Heart right ventricle (tissue), 16 donors: ENCODE measurements at regions of chr7 and their contacts with region 1.

Region 1: GRCh38 chr7:47088329-47089067 is 493.4 kb downstream of the TNS3 start:
- DNase-seq: peak; percentile 54 to 65
- ATAC-seq: peak; percentile 85 to 95 (median 90)
- H3K4me3 ChIP-seq: no peak overlapping the region
- H3K27ac ChIP-seq: no peak overlapping the region
- H3K4me1 ChIP-seq: peaks cover 0 to 13% (median 7%) of the 10 kb centered on the region in 9 donors
- H3K27me3 ChIP-seq: no peaks in the 10 kb centered on the region
- CTCF ChIP-seq: peak; percentile 80 to 97 (median 92)

Region 2: GRCh38 chr7:46352004-46352954 is 736.2 kb before region 1 on chr7:
- intact Hi-C with region 1: loop called in 9 of 10 experiments (anchors 5 to 10 kb)
- DNase-seq: peak in 1 of 2 donors; percentile 53
- ATAC-seq: peak in 6 of 8 donors; percentile 55 to 71 (median 64)
- H3K4me3 ChIP-seq: no peak overlapping the region
- H3K27ac ChIP-seq: no peak overlapping the region
- H3K4me1 ChIP-seq: no peaks in the 10 kb centered on the region
- H3K27me3 ChIP-seq: peaks cover 0 to 6% (median 0%) of the 10 kb centered on the region in 7 donors
- CTCF ChIP-seq: peak; percentile 46 to 81 (median 66)

Region 3: DNA sequence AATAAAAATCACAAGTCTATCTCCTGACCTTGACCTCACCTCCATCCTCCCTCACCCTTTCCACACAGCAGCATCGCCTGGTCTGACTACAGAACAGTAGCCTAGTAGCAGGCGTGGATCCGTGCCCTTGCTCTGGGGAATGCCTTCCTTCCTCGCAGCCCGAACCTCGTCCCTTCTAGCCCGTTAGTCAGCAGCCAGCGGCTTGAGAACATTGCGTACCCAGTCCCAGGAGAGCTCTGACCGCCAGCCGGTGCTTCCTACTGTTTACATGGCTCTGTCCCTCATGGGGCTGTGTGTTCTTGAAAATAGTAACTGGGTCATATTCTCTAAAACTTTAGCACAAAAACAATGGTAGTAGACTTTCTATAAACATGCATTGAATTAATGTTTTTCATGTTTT is 484.7 kb before region 1 on chr7:
- intact Hi-C with region 1: loop called in 1 of 10 experiments (anchors 5 kb)
- DNase-seq: peak; percentile 87
- ATAC-seq: peak; percentile 81 to 98 (median 95)
- H3K4me3 ChIP-seq: no peak overlapping the region
- H3K27ac ChIP-seq: peak overlapping the region; percentile 38 to 89 (median 76)
- H3K4me1 ChIP-seq: peaks cover 15 to 43% (median 23%) of the 10 kb centered on the region in 9 donors
- H3K27me3 ChIP-seq: no peaks in the 10 kb centered on the region
- CTCF ChIP-seq: no peak

Region 4: GRCh38 chr7:46752881-46753366 is 335.6 kb before region 1 on chr7:
- intact Hi-C with region 1: loop called in 1 of 10 experiments (anchors 10 kb)
- DNase-seq: no peak
- ATAC-seq: peak in 1 of 8 donors; percentile 53
- H3K4me3 ChIP-seq: no peak overlapping the region
- H3K27ac ChIP-seq: no peak overlapping the region
- H3K4me1 ChIP-seq: peaks cover 0 to 17% (median 7%) of the 10 kb centered on the region in 9 donors
- H3K27me3 ChIP-seq: no peaks in the 10 kb centered on the region
- CTCF ChIP-seq: no peak

Region 5: GRCh38 chr7:46945328-46945727 is 143.2 kb before region 1 on chr7:
- intact Hi-C with region 1: loop called in 1 of 10 experiments (anchors 5 kb)
- DNase-seq: no peak
- ATAC-seq: no peak
- H3K4me3 ChIP-seq: no peak overlapping the region
- H3K27ac ChIP-seq: no peak overlapping the region
- H3K4me1 ChIP-seq: peaks cover 0 to 11% (median 0%) of the 10 kb centered on the region in 9 donors
- H3K27me3 ChIP-seq: no peaks in the 10 kb centered on the region
- CTCF ChIP-seq: no peak